ENCODE measurements at regions of chr17 and their contacts with region 1.

Region 1: DNA sequence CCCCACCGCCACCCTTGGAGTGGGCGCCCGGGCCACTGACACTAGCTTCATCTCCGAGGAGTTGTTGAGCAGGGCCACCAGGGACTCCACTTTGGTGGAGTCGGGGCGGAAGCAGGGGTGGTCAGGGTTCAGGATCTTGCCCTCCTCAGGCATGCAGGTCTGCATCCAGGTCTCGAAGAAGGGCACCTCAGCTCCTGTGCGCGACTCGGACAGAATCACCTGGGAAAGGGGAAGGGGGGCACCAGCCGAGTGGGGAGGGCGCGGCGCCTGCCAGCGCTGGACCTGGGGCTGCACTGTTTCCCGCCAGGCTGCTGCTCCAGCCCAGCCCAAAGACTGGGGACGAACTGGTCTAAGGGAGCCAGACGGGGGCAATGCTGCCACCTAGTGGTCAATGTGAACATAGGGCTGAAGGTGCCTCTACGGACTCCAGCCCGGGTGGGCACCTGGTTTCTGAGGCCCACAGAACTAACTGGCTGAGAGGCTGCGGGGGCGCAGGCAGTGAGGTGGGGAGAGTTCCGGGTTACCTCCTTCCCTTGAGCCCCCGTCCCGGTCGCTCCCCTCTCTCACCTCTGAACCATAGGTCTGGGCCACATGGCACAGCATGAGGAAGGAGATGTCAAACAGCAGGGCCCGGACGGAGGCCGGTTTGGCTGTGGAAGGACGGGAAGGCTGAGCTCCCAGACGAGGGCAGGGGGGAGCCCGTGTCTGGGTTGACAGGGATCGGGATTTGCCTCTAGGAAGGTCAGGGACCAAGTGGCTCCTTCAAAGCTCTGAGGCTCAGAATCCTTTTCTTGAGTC is 11.8 kb downstream of the CSF3 start:
- DNase-seq: peak; percentile 83 to 90 (median 83)
- ATAC-seq: peak; percentile 85 to 93 (median 88)
- H3K4me3 ChIP-seq: no peak overlapping the region
- H3K27ac ChIP-seq: peak overlapping the region in 3 of 12 donors; percentile 14 to 31 (median 18)
- H3K4me1 ChIP-seq: peaks cover 0 to 30% (median 11%) of the 10 kb centered on the region in 12 donors
- H3K27me3 ChIP-seq: no peaks in the 10 kb centered on the region
- CTCF ChIP-seq: peak; percentile 86 to 98 (median 94)
- POLR2A ChIP-seq: no peak

Region 2: GRCh38 chr17:39929646-39930407 is 97.2 kb before region 1 on chr17:
- intact Hi-C with region 1: no loop called
- DNase-seq: no peak
- ATAC-seq: no peak
- H3K4me3 ChIP-seq: peak overlapping the region in 4 of 12 donors; percentile 3 to 85 (median 80)
- H3K27ac ChIP-seq: peak overlapping the region; percentile 51 to 98 (median 96)
- H3K4me1 ChIP-seq: peaks cover 6 to 67% (median 41%) of the 10 kb centered on the region in 12 donors
- H3K27me3 ChIP-seq: no peaks in the 10 kb centered on the region
- CTCF ChIP-seq: no peak
- POLR2A ChIP-seq: no peak

Region 3: DNA sequence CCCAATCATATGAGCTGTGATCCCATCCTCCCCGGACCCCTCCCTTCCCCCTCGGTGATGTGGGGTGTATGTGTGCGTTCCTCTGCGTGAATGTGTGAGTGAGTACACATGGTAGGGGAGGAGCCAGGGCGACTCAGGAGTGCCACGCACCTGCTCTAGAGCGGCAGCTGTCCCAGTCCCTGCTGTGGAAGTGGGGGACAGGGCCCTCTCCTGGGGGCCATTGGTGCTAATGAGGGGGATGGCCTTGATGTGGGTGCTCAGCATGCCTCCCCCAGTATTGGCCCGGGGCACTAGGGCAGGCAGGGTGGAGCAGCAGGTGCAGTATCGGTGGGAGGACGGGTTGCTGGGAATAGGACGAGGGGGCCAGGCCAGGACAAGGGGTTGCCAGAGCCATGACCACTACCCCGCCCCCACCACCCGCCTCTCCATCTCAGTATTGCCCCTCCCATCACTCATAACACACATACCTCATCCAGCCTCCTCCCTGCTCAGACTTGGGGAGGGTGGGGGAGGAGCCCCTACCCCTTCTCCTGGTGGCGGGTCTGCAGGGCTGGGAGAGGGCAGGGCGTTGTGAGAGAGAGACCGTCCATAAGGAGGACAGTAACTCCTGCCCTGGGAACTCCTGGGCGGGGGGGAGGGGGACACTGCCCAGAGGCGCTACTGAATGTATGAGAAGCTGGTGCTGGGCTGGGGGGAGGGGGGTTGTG is 64.8 kb after region 1 on chr17:
- intact Hi-C with region 1: loop called in 3 of 10 experiments (anchors 5 to 10 kb)
- DNase-seq: peak in 3 of 5 donors; percentile 46 to 54 (median 54)
- ATAC-seq: peak in 3 of 4 donors; percentile 1 to 36 (median 3)
- H3K4me3 ChIP-seq: no peak overlapping the region
- H3K27ac ChIP-seq: peak overlapping the region; percentile 12 to 100 (median 94)
- H3K4me1 ChIP-seq: peaks cover under 1 to 76% (median 60%) of the 10 kb centered on the region in 12 donors
- H3K27me3 ChIP-seq: no peaks in the 10 kb centered on the region
- CTCF ChIP-seq: no peak
- POLR2A ChIP-seq: no peak

Region 4: GRCh38 chr17:40177275-40177874 is 150.4 kb after region 1 on chr17 and contains the start of gene RAPGEFL1:
- intact Hi-C with region 1: loop called in 1 of 10 experiments (anchors 10 kb)
- DNase-seq: peak; percentile 72 to 89 (median 77)
- ATAC-seq: peak; percentile 59 to 84 (median 82)
- H3K4me3 ChIP-seq: peak within 1 kb of the TSS; percentile 12 to 62 (median 52)
- H3K27ac ChIP-seq: peak within 1 kb of the TSS in 2 of 12 donors; percentile 13 to 29
- H3K4me1 ChIP-seq: peaks cover 0 to 21% (median 10%) of the 10 kb centered on the region in 12 donors
- H3K27me3 ChIP-seq: no peaks in the 10 kb centered on the region
- CTCF ChIP-seq: no peak
- POLR2A ChIP-seq: no peak
- total RNA-seq, gene RAPGEFL1: 2.2 to 4.8 (median 2.9) TPM